ENCODE measurements at regions of chr2 and their contacts with region 1.

Region 1: DNA sequence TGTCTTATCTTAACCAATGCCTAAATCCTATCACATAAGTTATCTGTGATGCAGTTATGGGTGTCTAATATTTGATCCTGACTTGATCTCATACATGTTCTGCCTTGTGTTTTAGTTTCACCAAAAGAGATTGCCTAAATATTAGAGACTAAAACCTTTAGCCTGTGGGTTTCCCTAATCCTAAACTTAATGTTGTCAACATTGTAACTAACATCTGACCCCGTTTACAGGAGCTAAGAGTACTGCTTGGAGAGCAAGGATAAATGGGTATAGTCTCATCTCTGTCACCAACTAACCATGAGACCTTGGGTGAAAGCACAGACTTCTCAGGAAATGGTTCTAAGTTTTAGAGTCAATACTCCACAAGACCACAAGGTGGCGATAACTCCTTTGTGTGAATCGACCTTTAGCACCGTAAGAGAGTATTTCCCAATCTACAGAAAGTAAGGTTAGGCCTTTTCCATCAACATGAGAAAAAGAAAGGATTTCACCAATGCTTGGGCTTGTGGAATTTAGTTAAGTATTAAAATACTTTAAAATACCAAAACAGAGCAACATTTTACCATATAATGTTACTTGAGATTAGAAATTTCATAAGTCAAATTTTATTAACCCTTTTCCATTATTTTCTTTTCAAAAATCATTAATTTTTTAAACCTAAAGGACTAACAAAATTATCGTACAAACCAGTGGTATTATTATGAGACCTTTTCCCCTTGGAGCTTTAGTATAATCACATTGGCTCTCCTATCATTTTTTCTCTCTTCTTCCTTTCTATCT is 60.5 kb downstream of the G6PC2 start:
- DNase-seq: no peak
- H3K4me3 ChIP-seq: no peak overlapping the region
- H3K27ac ChIP-seq: peak overlapping the region in 6 of 59 donors; percentile 9 to 68 (median 34)
- H3K27me3 ChIP-seq: no peaks in the 10 kb centered on the region
- CTCF ChIP-seq: peak; percentile 35 to 92 (median 81)

Region 2: GRCh38 chr2:169109502-169110409 is 148.1 kb after region 1 on chr2:
- intact Hi-C with region 1: loop called in 1 of 2 experiments (anchors 5 kb)
- DNase-seq: peak; percentile 66 to 87 (median 79)
- H3K4me3 ChIP-seq: peak overlapping the region in 21 of 59 donors; percentile 5 to 51 (median 30)
- H3K27ac ChIP-seq: no peak overlapping the region
- H3K27me3 ChIP-seq: no peaks in the 10 kb centered on the region
- CTCF ChIP-seq: peak; percentile 78 to 94 (median 87)

Region 3: GRCh38 chr2:169119816-169120215 is 158.2 kb after region 1 on chr2:
- intact Hi-C with region 1: no loop called
- DNase-seq: no peak
- H3K4me3 ChIP-seq: no peak overlapping the region
- H3K27ac ChIP-seq: no peak overlapping the region
- H3K27me3 ChIP-seq: no peaks in the 10 kb centered on the region
- CTCF ChIP-seq: no peak

Region 4: DNA sequence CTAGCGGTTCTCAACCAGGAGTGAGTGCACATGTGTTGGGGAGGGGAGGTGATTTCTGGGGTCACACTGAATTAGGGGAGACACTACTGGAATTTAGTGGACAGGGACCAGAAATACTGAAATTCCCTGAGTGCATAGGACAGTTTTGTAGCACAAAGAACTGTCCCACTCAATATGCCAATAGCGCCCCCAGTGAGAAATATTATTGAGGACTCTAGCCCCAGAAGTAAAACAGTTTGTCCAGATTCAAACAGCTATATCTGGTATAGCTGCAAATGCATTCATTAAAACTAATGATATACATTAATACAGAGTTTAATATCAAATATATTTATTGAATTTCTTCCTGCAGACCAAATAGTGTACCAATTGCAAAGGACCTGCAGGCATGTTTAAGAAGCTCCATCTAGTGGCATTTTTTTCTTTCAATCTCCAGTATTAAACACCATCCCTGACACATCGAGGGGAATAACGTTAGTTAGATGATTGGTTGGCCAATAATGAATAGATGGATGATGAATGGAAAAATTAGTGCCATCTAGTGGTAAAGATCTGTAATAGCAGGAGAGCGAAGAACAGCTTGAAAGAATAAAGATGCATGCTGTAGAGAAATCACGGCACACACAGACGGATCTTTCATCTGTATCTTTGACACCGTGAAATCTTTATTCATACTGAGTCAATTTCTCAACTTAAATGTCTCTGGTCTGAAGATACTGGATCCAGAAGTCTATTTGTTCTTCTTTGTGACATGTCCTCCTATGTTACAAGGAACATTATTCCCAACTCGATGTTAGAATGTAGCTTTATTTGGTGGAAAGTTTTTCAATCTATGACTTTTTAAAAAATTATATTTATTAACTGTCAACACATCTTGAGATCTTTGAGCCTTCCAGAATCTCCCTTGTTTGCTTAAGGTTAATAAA is 170.2 kb after region 1 on chr2:
- intact Hi-C with region 1: loop called in 1 of 2 experiments (anchors 5 kb)
- DNase-seq: no peak
- H3K4me3 ChIP-seq: no peak overlapping the region
- H3K27ac ChIP-seq: peak overlapping the region in 3 of 59 donors; percentile 7 to 48 (median 46)
- H3K27me3 ChIP-seq: no peaks in the 10 kb centered on the region
- CTCF ChIP-seq: peak; percentile 76 to 95 (median 89)

Region 5: GRCh38 chr2:169141713-169142352 is 180.2 kb after region 1 on chr2:
- intact Hi-C with region 1: loop called in 1 of 2 experiments (anchors 2 kb)
- DNase-seq: peak in 2 of 10 donors; percentile 8 to 23
- H3K4me3 ChIP-seq: no peak overlapping the region
- H3K27ac ChIP-seq: no peak overlapping the region
- H3K27me3 ChIP-seq: no peaks in the 10 kb centered on the region
- CTCF ChIP-seq: peak in 55 of 56 donors; percentile 33 to 77 (median 61)

Region 6: GRCh38 chr2:169397697-169398096 is 436.1 kb after region 1 on chr2:
- intact Hi-C with region 1: loop called in 1 of 2 experiments (anchors 10 kb)
- DNase-seq: no peak
- H3K4me3 ChIP-seq: no peak overlapping the region
- H3K27ac ChIP-seq: no peak overlapping the region
- H3K27me3 ChIP-seq: no peaks in the 10 kb centered on the region
- CTCF ChIP-seq: peak in 54 of 56 donors; percentile 33 to 82 (median 62)